Activated CD4-positive, alpha-beta T cell treated with anti-CD3 and anti-CD28 coated beads, Interleukin-2, amount 10 ng/mL, durations not matched to agents 24 days and 14 days (primary cell): ENCODE measurements at regions of chr18 and their contacts with region 1.

Region 1: GRCh38 chr18:46028536-46028891 is 43.5 kb downstream of the PSTPIP2 start:
- DNase-seq: no peak
- H3K4me3 Mint-ChIP-seq: peak overlapping the region; percentile 91
- H3K27ac Mint-ChIP-seq: peak overlapping the region; percentile 80
- H3K4me1 Mint-ChIP-seq: peaks cover 13% of the 10 kb centered on the region
- H3K27me3 Mint-ChIP-seq: peaks cover 14% of the 10 kb centered on the region

Region 2: DNA sequence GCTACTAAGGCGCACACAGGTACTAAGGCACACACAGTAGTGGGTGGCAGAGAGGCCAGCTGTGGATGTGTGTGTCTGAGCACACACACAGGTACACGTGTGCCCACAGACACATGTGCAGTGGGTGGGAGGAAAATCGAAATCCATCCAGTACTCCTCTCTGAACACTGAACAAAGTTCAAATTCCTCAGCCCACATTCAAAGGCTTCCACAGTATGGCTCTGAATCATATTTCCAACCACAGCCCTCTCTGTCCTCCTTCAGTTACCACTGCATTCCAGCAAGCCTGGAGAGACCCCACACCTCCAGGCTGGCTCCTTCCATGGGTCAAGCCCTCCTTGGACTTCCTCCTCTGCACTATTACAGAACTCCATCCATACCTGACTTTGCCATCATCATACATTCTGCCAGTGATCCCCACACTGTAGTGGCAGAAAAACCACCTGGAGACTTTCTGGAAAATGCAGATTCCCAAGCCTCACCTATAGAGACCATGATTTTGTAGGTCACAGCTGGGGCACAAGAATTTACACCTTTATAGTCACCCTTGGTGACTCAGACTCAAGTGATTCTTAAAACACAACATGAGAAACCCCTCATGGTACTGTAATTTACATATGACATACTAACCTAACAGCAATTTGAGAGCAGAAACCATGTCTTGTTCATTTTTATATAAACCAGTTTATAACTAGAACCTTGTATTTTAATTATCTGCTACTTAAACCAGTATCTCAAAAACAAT is 92.8 kb before region 1 on chr18:
- intact Hi-C with region 1: no loop called
- DNase-seq: no peak
- H3K4me3 Mint-ChIP-seq: no peak overlapping the region
- H3K27ac Mint-ChIP-seq: no peak overlapping the region
- H3K4me1 Mint-ChIP-seq: peaks cover 12% of the 10 kb centered on the region
- H3K27me3 Mint-ChIP-seq: no peaks in the 10 kb centered on the region

Region 3: GRCh38 chr18:45993389-45993788 is 35.1 kb before region 1 on chr18:
- intact Hi-C with region 1: no loop called
- DNase-seq: no peak
- H3K4me3 Mint-ChIP-seq: no peak overlapping the region
- H3K27ac Mint-ChIP-seq: no peak overlapping the region
- H3K4me1 Mint-ChIP-seq: peaks cover 14% of the 10 kb centered on the region
- H3K27me3 Mint-ChIP-seq: no peaks in the 10 kb centered on the region

Region 4: GRCh38 chr18:46042571-46043123 is 14.1 kb after region 1 on chr18:
- intact Hi-C with region 1: loop called (anchors 2 kb)
- DNase-seq: peak; percentile 82
- H3K4me3 Mint-ChIP-seq: peak overlapping the region; percentile 66
- H3K27ac Mint-ChIP-seq: peak overlapping the region; percentile 52
- H3K4me1 Mint-ChIP-seq: peaks cover 33% of the 10 kb centered on the region
- H3K27me3 Mint-ChIP-seq: no peaks in the 10 kb centered on the region

Region 5: DNA sequence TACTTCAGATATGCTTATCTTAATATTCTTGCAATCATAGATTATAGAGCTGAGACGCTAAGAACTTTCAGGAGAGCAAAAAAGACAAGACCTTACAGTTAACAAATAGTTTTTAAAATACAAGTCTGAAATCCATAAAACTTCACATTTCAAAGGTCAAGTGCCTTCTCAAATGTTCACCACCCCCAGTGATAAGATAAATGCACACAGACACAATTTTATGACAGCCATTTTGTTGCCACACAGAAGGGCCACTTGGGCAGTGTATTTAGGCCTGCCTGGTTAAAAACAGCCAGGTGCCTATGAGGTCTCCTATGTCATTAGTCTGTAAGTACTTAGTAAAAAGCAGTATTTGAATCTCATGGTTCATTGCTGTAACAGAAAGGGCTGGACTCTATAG is 51.6 kb after region 1 on chr18:
- intact Hi-C with region 1: no loop called
- DNase-seq: no peak
- H3K4me3 Mint-ChIP-seq: no peak overlapping the region
- H3K27ac Mint-ChIP-seq: no peak overlapping the region
- H3K4me1 Mint-ChIP-seq: no peaks in the 10 kb centered on the region
- H3K27me3 Mint-ChIP-seq: no peaks in the 10 kb centered on the region

Region 6: GRCh38 chr18:46859855-46860254 is 831.3 kb after region 1 on chr18:
- intact Hi-C with region 1: no loop called
- DNase-seq: no peak
- H3K4me3 Mint-ChIP-seq: no peak overlapping the region
- H3K27ac Mint-ChIP-seq: no peak overlapping the region
- H3K4me1 Mint-ChIP-seq: peaks cover 10% of the 10 kb centered on the region
- H3K27me3 Mint-ChIP-seq: no peaks in the 10 kb centered on the region